Activated CD8-positive, alpha-beta memory T cell treated with anti-CD3 and anti-CD28 coated beads, Interleukin-2, amount 10 ng/mL, durations not matched to agents 7 days and 5 days (primary cell): ENCODE measurements at regions of chr7 and their contacts with region 1.

Region 1: GRCh38 chr7:91880413-91881241 is at the start of gene MTERF1:
- DNase-seq: peak; percentile 94
- ATAC-seq: peak; percentile 98
- H3K4me3 Mint-ChIP-seq: peak within 1 kb of the TSS; percentile 88
- H3K27ac Mint-ChIP-seq: peak within 1 kb of the TSS; percentile 95
- H3K4me1 Mint-ChIP-seq: peaks cover 33% of the 10 kb centered on the region
- H3K27me3 Mint-ChIP-seq: no peaks in the 10 kb centered on the region
- total RNA-seq, gene MTERF1: 14.9 to 17.4 TPM

Region 2: DNA sequence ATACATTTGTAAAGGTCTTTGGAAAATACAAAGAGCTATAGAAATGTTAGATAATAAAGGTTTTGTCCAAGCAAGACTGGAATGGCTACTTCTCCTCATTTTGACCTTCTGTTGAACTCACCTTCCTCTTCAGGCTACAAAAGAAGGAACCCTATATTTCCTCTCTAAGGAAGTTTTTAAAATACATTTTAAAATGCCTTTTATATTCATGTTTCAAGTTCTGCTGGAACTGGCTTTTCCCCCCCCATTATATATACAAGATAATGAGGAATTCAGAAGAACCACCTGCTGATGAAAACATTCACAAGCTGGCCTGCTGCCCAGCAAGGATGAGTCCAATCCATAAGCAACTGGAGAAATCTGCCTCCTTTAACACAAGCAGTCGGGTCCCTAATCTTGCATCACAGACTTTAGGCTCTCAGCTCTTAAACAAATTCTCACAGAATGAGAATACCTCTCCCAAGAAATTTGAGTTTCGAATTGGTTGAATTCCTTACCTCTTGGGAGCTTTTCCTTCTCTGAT is 44.7 kb before region 1 on chr7:
- CTCF ChIA-PET with region 1: interaction called, 15 read pairs
- DNase-seq: no peak
- ATAC-seq: no peak
- H3K4me3 Mint-ChIP-seq: no peak overlapping the region
- H3K27ac Mint-ChIP-seq: no peak overlapping the region
- H3K4me1 Mint-ChIP-seq: no peaks in the 10 kb centered on the region
- H3K27me3 Mint-ChIP-seq: no peaks in the 10 kb centered on the region

Region 3: DNA sequence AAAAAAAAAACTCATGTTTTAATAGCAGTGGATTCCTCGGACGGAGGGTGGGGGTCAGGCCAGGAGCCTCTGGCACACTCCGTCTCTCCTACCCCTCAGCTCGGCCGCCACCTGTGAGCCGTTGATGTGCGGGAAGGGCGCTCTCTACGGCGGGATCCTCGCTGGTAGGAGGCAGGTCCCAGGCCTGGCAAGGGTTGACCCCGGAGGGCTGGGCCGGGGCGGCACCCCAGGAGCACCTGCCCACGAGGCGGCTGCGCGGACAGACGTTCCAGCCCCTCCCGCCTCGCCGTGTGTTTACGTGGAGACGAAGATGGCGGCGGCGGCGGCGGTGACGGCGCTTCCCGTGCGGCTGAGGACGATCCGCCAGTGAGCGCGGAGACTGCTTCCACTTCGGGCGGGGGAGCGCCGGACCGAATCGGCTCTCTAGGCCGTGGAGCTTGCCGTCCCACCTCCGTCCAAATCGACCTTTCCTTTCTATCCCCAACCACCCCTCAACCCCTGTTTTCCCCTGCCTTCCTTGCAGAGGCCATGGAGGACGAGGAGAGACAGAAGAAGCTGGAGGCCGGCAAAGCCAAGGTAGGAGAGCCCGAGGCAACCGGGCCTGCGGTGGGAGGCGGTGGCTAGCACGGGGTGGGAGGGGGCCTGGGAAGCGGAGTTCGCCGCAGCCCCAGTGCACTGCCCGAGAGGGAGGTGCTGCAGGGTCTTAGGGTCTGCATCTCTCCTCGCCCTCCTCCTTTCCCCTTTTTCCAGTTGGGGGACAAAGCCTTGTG is 60.1 kb after region 1 on chr7 and contains the start of gene AKAP9:
- CTCF ChIA-PET with region 1: interaction called, 10 read pairs
- DNase-seq: peak; percentile 93
- ATAC-seq: peak; percentile 95
- H3K4me3 Mint-ChIP-seq: peak within 1 kb of the TSS; percentile 87
- H3K27ac Mint-ChIP-seq: peak within 1 kb of the TSS; percentile 87
- H3K4me1 Mint-ChIP-seq: peaks cover 28% of the 10 kb centered on the region
- H3K27me3 Mint-ChIP-seq: no peaks in the 10 kb centered on the region
- total RNA-seq, gene AKAP9: 35.1 to 38.4 TPM

Region 4: DNA sequence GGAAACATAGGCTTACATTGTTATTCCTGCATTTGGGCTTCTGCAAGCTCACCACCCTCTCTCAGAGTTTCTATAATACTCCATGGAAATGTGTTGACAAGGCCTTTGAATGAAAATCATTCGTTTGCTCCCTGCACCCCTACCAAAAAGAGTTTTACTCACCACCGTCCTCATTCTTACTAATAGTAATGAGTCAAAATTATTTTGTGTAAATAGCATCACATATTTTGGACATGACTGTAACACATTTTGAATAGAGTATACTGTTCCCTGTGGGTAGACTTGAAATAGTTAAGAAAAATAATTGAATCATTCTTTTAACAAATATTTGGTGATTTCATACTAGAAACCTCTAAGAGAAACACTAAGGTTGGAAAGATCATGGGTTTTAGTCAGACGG is 144.6 kb after region 1 on chr7:
- CTCF ChIA-PET with region 1: no interaction called
- DNase-seq: no peak
- ATAC-seq: no peak
- H3K4me3 Mint-ChIP-seq: no peak overlapping the region
- H3K27ac Mint-ChIP-seq: no peak overlapping the region
- H3K4me1 Mint-ChIP-seq: no peaks in the 10 kb centered on the region
- H3K27me3 Mint-ChIP-seq: no peaks in the 10 kb centered on the region